Activated CD4-positive, alpha-beta T cell treated with anti-CD3 and anti-CD28 coated beads for 36 hours (primary cell): ENCODE measurements at regions of chr14 and their contacts with region 1.

Region 1: DNA sequence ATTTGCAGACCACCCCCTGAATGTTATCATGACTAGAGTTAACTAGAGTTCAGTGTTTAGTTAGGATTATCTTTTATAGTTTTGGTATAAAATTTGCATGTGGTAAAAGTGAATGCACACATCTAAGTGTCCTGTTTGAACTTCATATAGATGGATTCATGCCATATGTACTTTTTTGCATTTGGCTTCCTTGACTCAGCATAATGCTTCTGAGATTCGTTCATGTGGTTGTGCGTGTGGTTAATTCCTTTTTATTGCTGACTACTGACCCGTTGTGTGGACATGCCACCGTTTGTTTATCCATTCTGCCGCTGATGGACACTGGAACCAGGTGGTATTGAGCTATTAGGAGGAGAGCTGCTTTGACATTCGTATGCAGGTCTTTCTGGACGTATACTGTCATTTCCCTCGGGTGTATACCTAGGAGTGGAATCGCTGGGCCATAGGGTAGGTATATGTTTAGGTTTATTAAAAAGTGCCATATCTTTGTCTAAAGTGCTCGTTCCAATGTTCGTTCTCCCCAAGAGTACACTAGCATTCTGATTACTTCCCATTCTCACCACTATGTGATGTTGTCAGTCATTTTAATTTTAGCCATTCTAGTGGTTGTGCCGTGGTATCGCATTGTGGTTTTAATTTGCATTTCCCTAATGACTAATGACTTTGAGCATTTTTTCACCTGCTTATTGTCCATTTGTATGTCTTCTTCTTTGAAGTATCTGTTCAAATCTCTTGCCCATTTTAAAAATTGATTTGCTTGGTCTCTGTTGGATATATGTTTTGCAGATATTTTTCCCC is 37.7 kb downstream of the RIN3 start:
- DNase-seq: no peak
- ATAC-seq: no peak
- H3K4me3 Mint-ChIP-seq: no peak overlapping the region
- H3K27ac Mint-ChIP-seq: no peak overlapping the region
- H3K4me1 Mint-ChIP-seq: peaks cover 35% of the 10 kb centered on the region
- H3K27me3 Mint-ChIP-seq: no peaks in the 10 kb centered on the region

Region 2: GRCh38 chr14:92585981-92586937 is 35.0 kb after region 1 on chr14:
- CTCF ChIA-PET with region 1: interaction called, 3 read pairs
- POLR2A ChIA-PET with region 1: no interaction called
- intact Hi-C with region 1: loop called (anchors 2 to 5 kb)
- DNase-seq: peak; percentile 43
- ATAC-seq: peak; percentile 79
- H3K4me3 Mint-ChIP-seq: no peak overlapping the region
- H3K27ac Mint-ChIP-seq: peak overlapping the region; percentile 68
- H3K4me1 Mint-ChIP-seq: peaks cover 85% of the 10 kb centered on the region
- H3K27me3 Mint-ChIP-seq: peaks cover 2% of the 10 kb centered on the region

Region 3: DNA sequence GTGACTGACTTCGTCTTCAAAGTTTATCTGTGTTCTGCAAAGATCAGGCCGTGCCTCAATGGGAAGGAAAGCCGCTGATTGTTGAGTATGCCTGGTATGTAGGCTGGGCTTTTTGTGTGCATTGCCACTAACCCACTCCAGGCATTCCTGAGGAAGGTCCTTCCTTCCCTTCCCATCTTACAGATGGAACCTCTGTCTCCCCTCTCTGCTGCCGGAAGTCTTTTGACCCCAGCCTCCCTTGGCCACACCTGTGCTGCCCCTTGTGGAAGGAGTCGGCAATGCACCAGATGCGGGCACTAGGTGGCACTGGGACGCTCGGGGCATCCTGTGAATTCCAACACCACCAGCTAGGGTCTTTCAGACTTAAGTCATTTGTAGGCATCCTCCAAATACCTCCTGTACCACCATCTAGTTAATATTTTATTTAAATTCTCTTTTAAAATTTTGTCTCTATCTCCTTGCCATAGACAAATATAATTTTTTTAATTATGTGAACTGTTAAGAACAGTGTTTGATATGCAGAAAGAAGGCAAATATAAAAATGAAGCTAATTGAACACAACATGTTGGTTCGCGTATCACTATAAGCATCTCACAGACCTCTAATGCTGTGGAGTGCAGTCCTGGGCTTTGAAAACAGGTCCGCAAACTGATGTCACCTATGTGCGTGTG is 61.9 kb after region 1 on chr14:
- CTCF ChIA-PET with region 1: no interaction called
- POLR2A ChIA-PET with region 1: no interaction called
- intact Hi-C with region 1: no loop called
- DNase-seq: peak; percentile 82
- ATAC-seq: peak; percentile 60
- H3K4me3 Mint-ChIP-seq: no peak overlapping the region
- H3K27ac Mint-ChIP-seq: no peak overlapping the region
- H3K4me1 Mint-ChIP-seq: peaks cover 47% of the 10 kb centered on the region
- H3K27me3 Mint-ChIP-seq: no peaks in the 10 kb centered on the region

Region 4: DNA sequence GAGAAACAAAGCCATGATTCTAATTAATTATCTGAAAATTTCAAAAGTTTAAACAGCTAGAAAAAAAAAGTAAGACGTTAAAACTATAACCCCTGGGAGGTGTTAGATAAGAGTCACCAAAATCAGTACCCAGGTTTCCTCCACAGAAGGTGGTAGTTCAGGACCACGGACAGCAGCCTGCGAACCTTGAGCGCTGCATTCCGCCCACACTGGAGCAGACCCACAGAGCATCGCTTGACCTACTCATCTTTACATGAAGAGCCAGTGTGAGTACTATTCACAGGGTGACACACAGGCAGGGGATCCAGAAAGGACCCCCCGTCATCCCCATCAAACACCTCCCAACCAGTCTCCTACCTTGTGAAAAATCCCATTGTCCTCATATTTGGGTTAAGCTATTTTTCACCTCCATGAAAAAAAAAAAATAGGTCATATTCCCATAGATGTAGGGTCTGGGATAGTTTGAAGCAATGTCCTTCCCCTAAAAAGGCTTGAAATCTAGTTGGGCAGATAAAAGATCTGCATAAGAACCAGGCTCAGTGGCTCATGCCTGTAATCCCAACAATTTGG is 362.9 kb after region 1 on chr14:
- CTCF ChIA-PET with region 1: no interaction called
- POLR2A ChIA-PET with region 1: no interaction called
- intact Hi-C with region 1: no loop called
- DNase-seq: peak; percentile 73
- ATAC-seq: no peak
- H3K4me3 Mint-ChIP-seq: no peak overlapping the region
- H3K27ac Mint-ChIP-seq: no peak overlapping the region
- H3K4me1 Mint-ChIP-seq: no peaks in the 10 kb centered on the region
- H3K27me3 Mint-ChIP-seq: peaks cover 16% of the 10 kb centered on the region